OCI-LY7 (cell line): ENCODE measurements at regions of chr22 and their contacts with region 1.

Region 1: DNA sequence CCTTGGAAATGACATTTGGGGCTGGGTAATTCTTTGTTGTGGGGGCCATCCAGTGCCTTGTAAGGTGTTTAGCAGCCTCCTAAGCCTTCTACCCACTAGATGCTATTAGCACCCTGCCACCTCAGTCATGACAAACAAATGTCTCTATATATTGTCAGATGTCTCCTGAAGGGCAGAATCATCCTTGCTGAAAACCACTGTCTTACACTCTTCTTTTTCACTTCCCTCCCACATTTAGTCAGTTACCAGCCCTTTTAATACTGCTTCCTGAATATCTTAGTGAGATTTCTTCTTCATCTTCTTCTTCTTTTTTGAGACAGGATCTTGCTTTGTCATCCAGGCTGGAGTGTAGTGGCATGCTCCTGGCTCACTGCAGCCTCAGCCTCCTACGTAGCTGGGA is 33.1 kb downstream of the TNRC6B start:
- DNase-seq: peak; percentile 83
- H3K4me3 ChIP-seq: peak overlapping the region; percentile 42
- H3K27ac ChIP-seq: peak overlapping the region; percentile 81
- H3K4me1 ChIP-seq: peaks cover 76% of the 10 kb centered on the region
- CTCF ChIP-seq: peak; percentile 30; the same call in 1 of the 2 replicates

Region 2: DNA sequence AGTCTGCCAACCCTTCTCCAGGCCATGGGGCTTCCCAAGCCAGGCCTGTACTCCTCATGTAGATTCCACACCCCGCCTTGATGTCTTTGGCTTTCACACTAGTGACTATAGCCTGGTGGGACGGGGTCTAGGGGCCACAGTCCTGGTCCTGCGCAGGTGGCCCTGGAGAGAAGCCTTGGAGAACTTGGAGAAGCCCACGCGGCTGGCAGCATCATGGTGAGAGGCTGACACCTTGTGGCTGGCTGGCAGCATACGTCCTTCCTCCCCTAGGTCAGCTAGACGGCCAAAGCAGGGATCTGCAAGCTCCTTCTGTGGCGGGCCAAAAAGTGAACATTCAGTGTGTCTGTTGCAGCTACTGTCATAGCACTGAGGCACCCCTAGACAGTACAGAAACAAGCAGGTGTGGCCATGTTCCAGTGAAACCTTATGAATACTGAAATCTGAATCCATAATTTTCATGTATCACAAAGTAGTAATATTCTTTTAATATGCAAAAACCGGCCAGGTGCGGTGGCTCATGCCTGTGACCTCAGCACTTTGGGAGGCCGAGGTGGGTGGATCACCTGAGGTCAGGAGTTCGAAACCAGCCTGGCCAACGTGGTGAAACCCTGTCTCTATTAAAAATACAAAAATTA is 174.1 kb before region 1 on chr22:
- CTCF ChIA-PET with region 1: no interaction called
- POLR2A ChIA-PET with region 1: no interaction called
- intact Hi-C with region 1: no loop called
- DNase-seq: peak; percentile 85
- H3K4me3 ChIP-seq: no peak overlapping the region
- H3K27ac ChIP-seq: no peak overlapping the region
- H3K4me1 ChIP-seq: peaks cover 3% of the 10 kb centered on the region
- CTCF ChIP-seq: peak; percentile 92

Region 3: DNA sequence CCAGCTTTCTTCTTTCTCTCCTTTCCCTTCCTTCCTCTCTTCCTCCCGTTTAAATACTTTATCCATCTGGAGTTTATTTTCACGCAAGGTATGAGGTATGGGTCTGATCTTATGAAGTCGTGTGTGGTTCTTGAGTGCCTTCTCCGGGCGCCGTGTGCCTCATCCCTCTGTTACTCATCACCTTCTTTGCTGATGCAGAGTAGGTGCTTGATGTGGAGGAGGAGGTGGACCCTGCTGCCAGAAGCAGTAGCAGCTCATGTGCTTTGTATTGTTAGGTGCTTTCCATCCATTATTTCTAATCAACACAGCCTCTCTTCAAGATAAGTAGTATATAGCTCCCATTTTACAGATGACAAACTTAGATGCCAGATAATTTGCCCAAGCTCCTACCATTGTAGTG is 13.9 kb after region 1 on chr22:
- CTCF ChIA-PET with region 1: no interaction called
- POLR2A ChIA-PET with region 1: no interaction called
- intact Hi-C with region 1: no loop called
- DNase-seq: no peak
- H3K4me3 ChIP-seq: no peak overlapping the region
- H3K27ac ChIP-seq: no peak overlapping the region
- H3K4me1 ChIP-seq: peaks cover 6% of the 10 kb centered on the region
- CTCF ChIP-seq: no peak

Region 4: GRCh38 chr22:40346178-40347118 is 135.6 kb after region 1 on chr22 and contains the start of gene ADSL:
- CTCF ChIA-PET with region 1: no interaction called
- POLR2A ChIA-PET with region 1: no interaction called
- intact Hi-C with region 1: loop called (anchors 5 kb)
- DNase-seq: peak; percentile 91
- H3K4me3 ChIP-seq: peak within 1 kb of the TSS; percentile 80
- H3K27ac ChIP-seq: peak within 1 kb of the TSS; percentile 96
- H3K4me1 ChIP-seq: peaks cover 29% of the 10 kb centered on the region
- CTCF ChIP-seq: no peak
- total RNA-seq, gene ADSL: 117 and 141 TPM in 2 replicates